Left ventricle myocardium superior (tissue), 1 donor: ENCODE measurements at regions of chr3 and their contacts with region 1.

Region 1: DNA sequence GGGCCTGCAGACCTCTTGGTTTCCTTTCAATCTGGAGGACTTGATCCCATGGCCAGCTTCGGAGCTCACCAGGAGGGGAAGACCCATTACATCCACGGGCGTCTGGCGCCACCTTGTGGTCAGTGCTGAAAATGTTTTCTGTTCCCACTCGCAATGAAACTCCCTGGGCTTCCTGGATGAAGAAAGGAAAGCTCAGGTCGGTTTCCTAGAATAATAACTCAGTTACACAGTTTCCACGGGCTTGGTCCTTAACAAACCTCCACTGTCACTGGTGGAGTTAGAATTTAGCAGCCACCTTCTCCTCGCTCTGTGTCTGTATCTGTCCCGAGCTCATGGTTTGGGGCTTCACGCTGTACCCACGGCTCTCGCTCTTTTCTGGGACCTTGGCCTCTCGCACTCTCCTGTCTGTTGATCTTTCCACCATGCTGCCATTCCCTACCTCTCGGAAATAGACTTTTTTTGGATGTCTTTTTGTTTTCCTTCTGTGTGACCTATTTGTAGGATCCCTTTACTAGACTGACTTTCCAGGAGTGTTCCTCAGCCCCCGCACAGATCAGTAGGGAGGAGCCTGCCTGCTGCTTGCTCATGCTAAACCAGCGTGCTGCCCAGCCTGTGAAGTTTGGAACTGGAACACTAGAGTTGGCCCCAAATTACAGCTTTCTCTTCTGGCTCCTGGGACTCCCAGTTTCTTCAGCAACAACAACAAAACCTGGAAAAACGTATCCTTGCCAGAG is 56.3 kb downstream of the IL20RB start:
- DNase-seq: peak; percentile 89
- ATAC-seq: peak; percentile 98

Region 2: DNA sequence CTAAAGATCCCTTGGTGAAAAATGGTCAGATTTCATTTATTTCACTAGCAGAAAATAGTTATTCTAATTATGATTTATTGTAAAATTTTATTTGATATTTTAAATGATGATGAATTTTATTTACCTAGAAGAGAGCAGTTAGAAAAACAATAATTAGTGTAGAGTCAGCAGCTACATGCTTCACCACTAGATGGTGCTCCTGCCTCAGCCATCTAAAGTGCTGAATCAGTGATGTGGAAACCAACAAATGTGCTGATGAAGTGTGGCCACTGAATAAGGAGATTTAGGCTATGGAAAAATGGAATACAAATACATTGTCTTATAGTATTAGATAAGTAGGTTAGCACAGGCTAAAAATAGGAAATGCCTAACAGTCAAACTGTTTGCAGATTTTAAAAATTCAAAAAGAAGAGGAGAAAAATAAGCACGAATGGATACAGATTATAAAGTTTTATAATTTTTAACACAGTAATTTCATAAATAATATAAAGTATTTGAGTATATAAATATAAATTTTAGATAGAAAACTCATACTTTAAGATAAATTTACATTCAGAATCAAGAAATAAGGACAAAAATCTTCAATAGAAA is 938.8 kb before region 1 on chr3:
- intact Hi-C with region 1: loop called (anchors 10 kb)
- DNase-seq: peak; percentile 60
- ATAC-seq: peak; percentile 81

Region 3: GRCh38 chr3:136390574-136390973 is 623.5 kb before region 1 on chr3:
- intact Hi-C with region 1: loop called (anchors 5 kb)
- DNase-seq: no peak
- ATAC-seq: peak; percentile 66

Region 4: GRCh38 chr3:137150825-137151224 is 136.7 kb after region 1 on chr3:
- intact Hi-C with region 1: no loop called
- DNase-seq: no peak
- ATAC-seq: no peak